WTC11 (cell line): ENCODE measurements at regions of chr1 and their contacts with region 1.

Region 1: GRCh38 chr1:17661546-17662157 is 93.5 kb upstream of the ACTL8 start:
- DNase-seq: peak; percentile 88
- ATAC-seq: peak; percentile 76
- H3K4me3 Mint-ChIP-seq: no peak overlapping the region
- H3K27ac Mint-ChIP-seq: peak overlapping the region; percentile 74
- H3K4me1 Mint-ChIP-seq: peaks cover 11% of the 10 kb centered on the region
- H3K27me3 Mint-ChIP-seq: no peaks in the 10 kb centered on the region
- CTCF ChIP-seq: peak; percentile 97

Region 2: GRCh38 chr1:17475729-17476128 is 185.9 kb before region 1 on chr1:
- CTCF ChIA-PET with region 1: no interaction called
- POLR2A ChIA-PET with region 1: no interaction called
- DNase-seq: no peak
- ATAC-seq: no peak
- H3K4me3 Mint-ChIP-seq: no peak overlapping the region
- H3K27ac Mint-ChIP-seq: no peak overlapping the region
- H3K4me1 Mint-ChIP-seq: peaks cover 47% of the 10 kb centered on the region
- H3K27me3 Mint-ChIP-seq: no peaks in the 10 kb centered on the region
- CTCF ChIP-seq: no peak

Region 3: GRCh38 chr1:17648457-17649145 is 13.1 kb before region 1 on chr1:
- CTCF ChIA-PET with region 1: interaction called, 22 read pairs
- POLR2A ChIA-PET with region 1: no interaction called
- DNase-seq: no peak
- ATAC-seq: no peak
- H3K4me3 Mint-ChIP-seq: no peak overlapping the region
- H3K27ac Mint-ChIP-seq: no peak overlapping the region
- H3K4me1 Mint-ChIP-seq: no peaks in the 10 kb centered on the region
- H3K27me3 Mint-ChIP-seq: no peaks in the 10 kb centered on the region
- CTCF ChIP-seq: no peak

Region 4: DNA sequence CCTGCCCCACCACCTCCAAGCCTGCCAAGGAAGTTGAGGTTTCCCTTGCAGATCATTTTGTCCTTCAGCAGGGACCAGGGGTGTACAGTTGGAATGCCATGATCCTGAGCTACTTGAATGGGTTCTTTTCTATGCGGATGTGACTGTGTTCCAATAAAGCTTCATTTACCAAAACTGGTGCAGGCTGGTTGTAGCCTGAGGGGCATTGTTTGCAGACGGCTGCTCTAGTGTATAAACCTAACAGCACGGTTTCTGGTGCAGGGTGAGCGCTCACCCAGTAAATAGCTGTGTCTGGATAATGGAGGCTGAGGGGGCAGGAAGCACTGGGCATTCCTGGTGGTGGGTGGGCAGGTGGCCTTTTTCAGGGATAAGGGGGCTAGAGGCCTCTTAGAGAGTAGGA is 20.7 kb after region 1 on chr1:
- CTCF ChIA-PET with region 1: interaction called, 27 read pairs
- POLR2A ChIA-PET with region 1: no interaction called
- DNase-seq: no peak
- ATAC-seq: no peak
- H3K4me3 Mint-ChIP-seq: no peak overlapping the region
- H3K27ac Mint-ChIP-seq: peak overlapping the region; percentile 64
- H3K4me1 Mint-ChIP-seq: peaks cover 10% of the 10 kb centered on the region; the same call in 1 of the 2 replicates
- H3K27me3 Mint-ChIP-seq: no peaks in the 10 kb centered on the region
- CTCF ChIP-seq: no peak

Region 5: DNA sequence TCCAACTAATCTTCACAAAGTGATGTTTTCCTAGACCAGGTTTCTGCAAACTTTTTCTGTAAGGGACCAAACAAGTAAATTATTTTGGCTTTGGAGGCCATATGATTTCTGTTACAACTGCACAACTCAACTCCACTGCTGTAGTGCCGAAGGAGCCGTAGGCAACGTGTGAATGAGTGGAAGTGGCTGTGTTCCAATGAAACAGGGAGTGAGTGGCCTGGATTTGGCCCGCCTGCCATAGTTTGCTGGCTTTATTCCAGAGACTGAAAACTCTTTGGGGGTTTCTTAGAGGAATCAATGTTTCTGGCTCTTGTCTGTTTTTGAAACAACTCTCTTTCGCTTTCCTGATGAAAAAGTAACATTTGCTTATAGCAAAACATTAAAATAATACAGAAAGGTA is 80.9 kb after region 1 on chr1:
- CTCF ChIA-PET with region 1: interaction called, 54 read pairs
- POLR2A ChIA-PET with region 1: no interaction called
- DNase-seq: no peak
- ATAC-seq: no peak
- H3K4me3 Mint-ChIP-seq: no peak overlapping the region
- H3K27ac Mint-ChIP-seq: no peak overlapping the region
- H3K4me1 Mint-ChIP-seq: peaks cover 8% of the 10 kb centered on the region
- H3K27me3 Mint-ChIP-seq: no peaks in the 10 kb centered on the region; the same call in 1 of the 2 replicates
- CTCF ChIP-seq: no peak

Region 6: GRCh38 chr1:17773591-17774326 is 112.1 kb after region 1 on chr1:
- CTCF ChIA-PET with region 1: interaction called, 13 read pairs
- POLR2A ChIA-PET with region 1: no interaction called
- DNase-seq: no peak
- ATAC-seq: peak; percentile 38; the same call in 1 of the 2 replicates
- H3K4me3 Mint-ChIP-seq: no peak overlapping the region
- H3K27ac Mint-ChIP-seq: no peak overlapping the region
- H3K4me1 Mint-ChIP-seq: no peaks in the 10 kb centered on the region; the same call in 1 of the 2 replicates
- H3K27me3 Mint-ChIP-seq: no peaks in the 10 kb centered on the region
- CTCF ChIP-seq: no peak

Region 7: DNA sequence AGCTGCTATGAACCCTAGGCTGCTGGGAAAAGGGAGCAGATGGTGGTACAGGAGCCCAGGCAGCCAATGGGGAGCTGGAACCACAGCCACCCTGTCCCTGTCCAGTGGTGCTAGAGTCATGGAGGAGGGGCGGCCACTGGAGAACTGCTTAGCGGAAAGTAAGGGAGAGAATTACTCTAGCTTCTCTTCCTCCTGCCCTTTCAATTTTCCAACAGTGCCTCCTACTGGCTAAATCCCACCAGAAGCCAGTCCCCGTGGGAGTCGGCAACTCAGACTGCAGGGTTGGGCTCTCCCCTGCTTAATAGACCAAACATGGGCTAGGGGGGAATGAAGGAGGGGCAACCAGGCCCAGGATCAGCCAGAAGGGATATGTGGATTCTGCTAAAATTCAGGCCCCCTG is 248.0 kb after region 1 on chr1:
- CTCF ChIA-PET with region 1: interaction called, 23 read pairs
- POLR2A ChIA-PET with region 1: no interaction called
- DNase-seq: peak; percentile 74
- ATAC-seq: peak; percentile 90
- H3K4me3 Mint-ChIP-seq: no peak overlapping the region
- H3K27ac Mint-ChIP-seq: no peak overlapping the region
- H3K4me1 Mint-ChIP-seq: peaks cover 11% of the 10 kb centered on the region
- H3K27me3 Mint-ChIP-seq: peaks cover 12% of the 10 kb centered on the region
- CTCF ChIP-seq: no peak